SK-N-SH (cell line): ENCODE measurements at regions of chr14 and their contacts with region 1.

Region 1: DNA sequence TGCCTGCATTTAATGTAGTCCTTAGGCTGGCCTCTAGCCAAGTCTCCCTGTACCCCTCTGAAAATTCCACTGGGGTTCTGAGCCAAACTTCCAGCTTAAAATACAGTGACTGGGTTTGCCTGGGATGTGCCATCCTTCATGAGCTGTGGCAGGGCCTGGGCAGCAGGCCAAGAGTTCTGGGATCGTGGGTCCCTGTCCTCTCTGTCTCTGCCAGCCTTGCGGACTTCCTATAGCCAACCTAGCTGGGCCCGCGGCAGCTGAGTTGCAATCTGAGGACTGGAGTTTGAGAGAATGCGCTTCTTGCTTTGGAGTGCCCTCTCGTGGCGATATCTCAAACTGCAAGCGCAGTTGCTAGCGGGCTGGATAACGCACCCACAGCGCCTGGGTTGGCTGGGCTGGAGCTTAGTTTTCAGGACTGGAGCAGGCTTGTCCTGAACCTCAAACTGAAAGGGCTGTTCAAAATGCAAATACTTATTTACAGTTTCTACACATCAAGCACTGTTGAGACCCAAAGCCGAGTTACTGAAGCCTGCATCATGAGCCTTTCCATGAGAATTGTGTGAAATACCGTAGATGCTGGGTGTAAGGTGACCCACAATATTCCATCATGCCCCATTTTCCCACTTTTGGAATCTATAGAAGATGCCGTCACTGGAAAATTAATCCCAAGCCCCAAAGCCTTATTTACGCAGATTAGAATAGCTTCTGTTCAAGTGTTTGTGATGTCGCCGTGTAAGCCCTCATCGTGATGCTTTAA is 7.3 kb upstream of the IFI27L2 start:
- DNase-seq: peak; percentile 81
- H3K4me3 ChIP-seq: no peak overlapping the region
- H3K27ac ChIP-seq: no peak overlapping the region
- H3K4me1 ChIP-seq: peaks cover 0 to 3% of the 10 kb centered on the region in 2 experiments; a peak in 2 of 4 replicates
- H3K27me3 ChIP-seq: no peaks in the 10 kb centered on the region
- CTCF ChIP-seq: peak; percentile 92
- EP300 ChIP-seq: no peak
- RAD21 ChIP-seq: peak; percentile 98

Region 2: DNA sequence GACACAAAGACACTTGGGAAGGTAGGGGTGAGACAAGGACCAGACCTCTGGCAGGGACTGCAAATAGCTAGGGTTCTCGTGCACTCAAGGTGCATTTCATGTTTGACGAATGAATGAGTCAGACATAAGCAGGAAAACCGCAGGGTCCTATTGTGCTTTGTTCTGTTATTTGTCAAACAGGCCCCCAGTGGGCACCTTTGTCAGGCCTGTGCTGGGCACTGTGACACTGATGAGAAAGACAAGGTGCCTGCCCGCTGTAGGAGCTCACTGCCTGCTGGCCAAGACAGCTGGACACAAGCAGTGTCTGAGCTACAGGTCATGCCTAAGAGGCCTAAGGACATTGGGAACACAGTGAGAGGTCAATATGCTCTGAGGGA is 108.3 kb before region 1 on chr14:
- CTCF ChIA-PET with region 1: interaction called, 132 read pairs
- POLR2A ChIA-PET with region 1: no interaction called
- DNase-seq: no peak
- H3K4me3 ChIP-seq: no peak overlapping the region
- H3K27ac ChIP-seq: no peak overlapping the region
- H3K4me1 ChIP-seq: peaks cover 0 to 10% of the 10 kb centered on the region in 2 experiments; a peak in 1 of 4 replicates
- H3K27me3 ChIP-seq: no peaks in the 10 kb centered on the region
- CTCF ChIP-seq: no peak
- EP300 ChIP-seq: no peak
- RAD21 ChIP-seq: no peak

Region 3: GRCh38 chr14:94045563-94046345 is 91.0 kb before region 1 on chr14:
- CTCF ChIA-PET with region 1: interaction called, 132 read pairs
- POLR2A ChIA-PET with region 1: no interaction called
- DNase-seq: no peak
- H3K4me3 ChIP-seq: no peak overlapping the region
- H3K27ac ChIP-seq: no peak overlapping the region; a peak in 1 of 4 replicates
- H3K4me1 ChIP-seq: peaks cover 0 to 15% of the 10 kb centered on the region in 2 experiments; a peak in 2 of 4 replicates
- H3K27me3 ChIP-seq: no peaks in the 10 kb centered on the region
- CTCF ChIP-seq: no peak
- EP300 ChIP-seq: no peak
- RAD21 ChIP-seq: no peak

Region 4: GRCh38 chr14:94056579-94057308 is 80.0 kb before region 1 on chr14:
- CTCF ChIA-PET with region 1: interaction called, 100 read pairs
- POLR2A ChIA-PET with region 1: no interaction called
- DNase-seq: no peak
- H3K4me3 ChIP-seq: no peak overlapping the region
- H3K27ac ChIP-seq: no peak overlapping the region
- H3K4me1 ChIP-seq: no peaks in the 10 kb centered on the region; a peak in 1 of 4 replicates
- H3K27me3 ChIP-seq: no peaks in the 10 kb centered on the region
- CTCF ChIP-seq: no peak
- EP300 ChIP-seq: no peak
- RAD21 ChIP-seq: no peak

Region 5: GRCh38 chr14:94115058-94115591 is 21.6 kb before region 1 on chr14:
- CTCF ChIA-PET with region 1: interaction called, 12 read pairs
- POLR2A ChIA-PET with region 1: no interaction called
- DNase-seq: peak; percentile 64
- H3K4me3 ChIP-seq: no peak overlapping the region
- H3K27ac ChIP-seq: peak overlapping the region in 1 of 2 experiments; percentile 5; a peak in 1 of 4 replicates
- H3K4me1 ChIP-seq: peaks cover 0 to 38% of the 10 kb centered on the region in 2 experiments; a peak in 1 of 4 replicates
- H3K27me3 ChIP-seq: no peaks in the 10 kb centered on the region
- CTCF ChIP-seq: no peak
- EP300 ChIP-seq: peak in 1 of 2 experiments; percentile 44; a peak in 1 of 4 replicates
- RAD21 ChIP-seq: no peak

Region 6: DNA sequence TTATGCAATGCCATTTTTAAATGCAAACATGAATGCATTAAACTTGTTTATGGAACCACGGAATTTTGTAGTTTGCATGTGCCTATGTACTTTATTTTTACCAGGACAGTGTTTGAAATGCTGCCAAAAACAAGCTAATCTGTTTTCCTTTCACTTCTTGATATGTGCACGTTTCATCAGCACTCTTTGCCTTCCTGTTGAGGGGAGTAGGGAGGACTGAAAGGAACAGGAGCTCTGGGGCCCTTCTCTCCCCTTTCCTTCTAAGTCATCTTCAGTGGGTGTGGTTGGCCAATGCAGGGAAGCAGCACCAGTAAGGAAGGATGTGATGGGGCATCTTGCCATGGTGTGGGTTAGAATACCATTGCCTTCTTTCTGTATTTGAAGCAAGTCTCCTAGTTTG is 25.2 kb after region 1 on chr14:
- CTCF ChIA-PET with region 1: interaction called, 13 read pairs
- POLR2A ChIA-PET with region 1: no interaction called
- DNase-seq: no peak
- H3K4me3 ChIP-seq: no peak overlapping the region
- H3K27ac ChIP-seq: no peak overlapping the region
- H3K4me1 ChIP-seq: peaks cover 0 to 4% of the 10 kb centered on the region in 2 experiments; a peak in 1 of 4 replicates
- H3K27me3 ChIP-seq: no peaks in the 10 kb centered on the region; the same call in 1 of the 2 replicates
- CTCF ChIP-seq: no peak
- EP300 ChIP-seq: no peak
- RAD21 ChIP-seq: no peak

Region 7: GRCh38 chr14:94180655-94181271 is 44.0 kb after region 1 on chr14:
- CTCF ChIA-PET with region 1: interaction called, 43 read pairs
- POLR2A ChIA-PET with region 1: no interaction called
- DNase-seq: peak; percentile 38
- H3K4me3 ChIP-seq: peak overlapping the region; percentile 21 to 38; a peak in 2 of 4 replicates
- H3K27ac ChIP-seq: peak overlapping the region in 1 of 2 experiments; percentile 34; a peak in 1 of 4 replicates
- H3K4me1 ChIP-seq: peaks cover 0 to 3% of the 10 kb centered on the region in 2 experiments; a peak in 2 of 4 replicates
- H3K27me3 ChIP-seq: no peaks in the 10 kb centered on the region
- CTCF ChIP-seq: peak; percentile 77
- EP300 ChIP-seq: no peak
- RAD21 ChIP-seq: peak; percentile 71

Region 8: GRCh38 chr14:94317259-94317658 is 180.5 kb after region 1 on chr14:
- CTCF ChIA-PET with region 1: no interaction called
- POLR2A ChIA-PET with region 1: no interaction called
- DNase-seq: no peak
- H3K4me3 ChIP-seq: no peak overlapping the region
- H3K27ac ChIP-seq: no peak overlapping the region
- H3K4me1 ChIP-seq: no peaks in the 10 kb centered on the region
- H3K27me3 ChIP-seq: no peaks in the 10 kb centered on the region
- CTCF ChIP-seq: no peak
- EP300 ChIP-seq: no peak
- RAD21 ChIP-seq: no peak